Body of pancreas (tissue), 4 donors: ENCODE measurements at regions of chr3 and their contacts with region 1.

Region 1: GRCh38 chr3:155323063-155323666 is 29.7 kb upstream of the STRIT1 start:
- DNase-seq: peak; percentile 20 to 61 (median 36)
- ATAC-seq: peak; percentile 45
- H3K4me3 ChIP-seq: no peak overlapping the region
- H3K27ac ChIP-seq: no peak overlapping the region
- H3K4me1 ChIP-seq: no peaks in the 10 kb centered on the region
- H3K27me3 ChIP-seq: no peaks in the 10 kb centered on the region
- CTCF ChIP-seq: peak; percentile 17 to 73 (median 55)
- POLR2A ChIP-seq: no peak

Region 2: DNA sequence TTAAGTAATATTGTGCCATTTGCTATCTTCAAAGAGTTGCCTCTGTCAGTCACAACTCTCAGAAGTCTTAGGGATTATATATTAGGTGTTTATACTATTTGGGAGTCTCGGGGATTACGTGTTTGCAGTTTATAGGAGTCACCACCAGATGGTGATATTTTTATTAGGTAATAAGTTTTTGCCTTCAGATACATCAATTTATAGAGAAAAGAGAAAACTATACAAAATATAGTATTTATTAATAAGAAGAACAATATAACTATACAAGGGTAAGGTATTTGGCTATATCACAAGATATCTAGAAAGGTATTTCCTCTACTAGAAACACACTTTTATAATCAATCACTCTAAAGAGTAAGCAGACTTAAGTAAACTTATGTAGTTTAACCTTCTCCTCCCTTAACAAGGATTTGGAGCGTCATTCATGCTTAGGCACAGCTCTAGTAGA is 988.2 kb before region 1 on chr3:
- intact Hi-C with region 1: loop called (anchors 10 kb)
- DNase-seq: no peak
- ATAC-seq: peak; percentile 50
- H3K4me3 ChIP-seq: no peak overlapping the region
- H3K27ac ChIP-seq: no peak overlapping the region
- H3K4me1 ChIP-seq: no peaks in the 10 kb centered on the region
- H3K27me3 ChIP-seq: no peaks in the 10 kb centered on the region
- CTCF ChIP-seq: peak; percentile 23 to 71 (median 48)
- POLR2A ChIP-seq: no peak

Region 3: DNA sequence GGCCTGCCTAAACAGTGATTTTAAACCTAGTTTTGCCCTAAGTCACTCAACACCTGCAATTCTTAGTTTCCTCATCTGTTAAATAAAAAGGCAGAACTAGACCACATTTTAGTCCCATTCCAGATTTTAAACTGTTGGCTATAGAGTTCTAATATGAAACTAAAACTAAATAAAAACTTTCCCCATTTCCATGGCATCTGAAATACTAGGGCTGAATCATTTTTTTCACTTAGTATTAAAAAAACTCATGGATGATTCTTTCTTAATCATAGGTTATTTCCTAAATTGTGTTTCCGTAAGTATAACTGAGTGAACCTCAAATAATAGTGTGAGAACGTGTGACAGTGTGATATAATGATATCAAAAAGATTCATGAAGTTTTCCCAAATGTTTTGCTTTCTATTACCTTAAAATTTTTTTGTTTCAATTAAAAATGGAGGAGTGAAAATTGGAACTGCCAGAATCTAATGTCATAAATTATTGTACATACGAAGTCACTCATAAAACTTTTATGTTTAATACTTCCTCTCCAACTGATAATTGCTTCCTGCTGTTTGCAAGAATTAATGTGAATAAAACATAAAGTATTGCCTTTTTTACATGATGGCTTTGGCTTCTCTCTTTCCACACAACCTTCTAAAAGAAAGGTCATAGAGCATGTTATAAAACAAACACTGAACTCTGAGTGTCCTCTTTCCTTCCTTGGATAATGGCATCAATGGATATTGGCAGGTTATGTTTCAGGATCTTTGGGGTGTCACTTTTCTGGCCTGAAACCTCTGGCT is 558.1 kb before region 1 on chr3:
- intact Hi-C with region 1: loop called (anchors 5 kb)
- DNase-seq: no peak
- ATAC-seq: no peak
- H3K4me3 ChIP-seq: no peak overlapping the region
- H3K27ac ChIP-seq: no peak overlapping the region
- H3K4me1 ChIP-seq: no peaks in the 10 kb centered on the region
- H3K27me3 ChIP-seq: no peaks in the 10 kb centered on the region
- CTCF ChIP-seq: no peak
- POLR2A ChIP-seq: no peak

Region 4: DNA sequence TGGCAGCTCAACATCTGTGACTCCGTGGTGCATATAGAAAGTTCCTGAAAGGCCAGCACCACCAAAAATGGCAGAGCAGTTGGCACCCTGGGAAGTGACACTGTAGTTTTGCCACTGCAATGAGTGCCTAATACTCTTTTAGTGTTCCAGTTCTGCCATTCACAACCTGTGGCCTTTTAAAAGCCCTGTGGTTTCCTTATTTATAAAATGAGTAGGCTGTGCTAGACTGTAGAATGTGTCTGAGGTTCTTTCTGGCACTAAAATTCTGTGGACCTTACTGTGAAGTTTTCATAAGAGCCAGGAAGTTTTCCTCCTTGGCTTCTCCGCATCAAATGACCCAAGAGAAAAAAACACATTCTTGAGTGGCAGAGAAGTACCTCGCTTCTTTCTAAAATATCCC is 168.9 kb before region 1 on chr3:
- intact Hi-C with region 1: no loop called
- DNase-seq: no peak
- ATAC-seq: no peak
- H3K4me3 ChIP-seq: no peak overlapping the region
- H3K27ac ChIP-seq: no peak overlapping the region
- H3K4me1 ChIP-seq: no peaks in the 10 kb centered on the region
- H3K27me3 ChIP-seq: no peaks in the 10 kb centered on the region
- CTCF ChIP-seq: no peak
- POLR2A ChIP-seq: no peak